ENCODE measurements at regions of chr17 and their contacts with region 1.

Region 1: GRCh38 chr17:68205251-68205807 is 42.5 kb upstream of the AMZ2 start:
- H3K4me3 Mint-ChIP-seq: peak overlapping the region; percentile 80
- H3K27ac Mint-ChIP-seq: peak overlapping the region; percentile 87
- H3K4me1 Mint-ChIP-seq: peaks cover 21% of the 10 kb centered on the region
- H3K27me3 Mint-ChIP-seq: peaks cover 46% of the 10 kb centered on the region

Region 2: DNA sequence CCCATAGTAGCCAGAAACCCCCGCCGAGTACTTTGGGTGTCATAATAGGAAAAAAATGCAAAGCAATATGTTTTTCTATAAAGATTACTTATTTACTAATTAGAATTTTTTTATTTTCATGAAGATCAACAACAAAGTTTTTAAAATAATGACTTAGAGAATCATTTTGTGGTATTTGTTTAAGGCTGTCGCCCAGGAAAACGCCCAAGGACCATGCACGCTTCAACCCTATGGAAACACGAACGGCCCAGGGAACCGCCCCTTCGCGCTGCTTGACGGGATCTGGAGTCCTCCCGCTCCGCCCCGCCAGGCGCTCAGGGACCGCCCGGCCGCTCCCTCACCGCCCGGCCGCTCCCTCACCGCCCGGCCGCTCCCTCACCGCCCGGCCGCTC is 170.2 kb before region 1 on chr17:
- intact Hi-C with region 1: no loop called
- H3K4me3 Mint-ChIP-seq: peak overlapping the region; percentile 93
- H3K27ac Mint-ChIP-seq: peak overlapping the region; percentile 87
- H3K4me1 Mint-ChIP-seq: peaks cover 16% of the 10 kb centered on the region
- H3K27me3 Mint-ChIP-seq: no peaks in the 10 kb centered on the region

Region 3: DNA sequence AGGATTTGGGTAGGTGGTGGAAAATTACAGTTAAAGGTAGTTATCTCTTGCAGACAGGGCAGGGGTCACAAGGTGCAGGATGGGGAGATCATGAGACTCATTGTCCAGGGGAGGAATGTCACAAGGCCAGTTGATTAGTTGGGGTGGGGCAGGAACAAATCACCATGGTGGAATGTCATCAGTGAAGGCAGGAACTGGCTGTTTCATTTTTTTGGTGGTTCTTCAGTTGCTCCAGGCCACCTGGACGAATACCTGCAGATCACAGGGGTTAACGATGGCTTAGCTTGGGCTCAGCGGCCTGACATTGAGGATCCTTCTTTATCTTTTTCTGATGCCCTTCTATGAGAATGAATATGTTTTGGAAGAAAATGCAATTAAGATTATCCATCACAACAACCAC is 82.7 kb before region 1 on chr17:
- intact Hi-C with region 1: no loop called
- H3K4me3 Mint-ChIP-seq: no peak overlapping the region
- H3K27ac Mint-ChIP-seq: no peak overlapping the region
- H3K4me1 Mint-ChIP-seq: peaks cover 11% of the 10 kb centered on the region
- H3K27me3 Mint-ChIP-seq: no peaks in the 10 kb centered on the region

Region 4: DNA sequence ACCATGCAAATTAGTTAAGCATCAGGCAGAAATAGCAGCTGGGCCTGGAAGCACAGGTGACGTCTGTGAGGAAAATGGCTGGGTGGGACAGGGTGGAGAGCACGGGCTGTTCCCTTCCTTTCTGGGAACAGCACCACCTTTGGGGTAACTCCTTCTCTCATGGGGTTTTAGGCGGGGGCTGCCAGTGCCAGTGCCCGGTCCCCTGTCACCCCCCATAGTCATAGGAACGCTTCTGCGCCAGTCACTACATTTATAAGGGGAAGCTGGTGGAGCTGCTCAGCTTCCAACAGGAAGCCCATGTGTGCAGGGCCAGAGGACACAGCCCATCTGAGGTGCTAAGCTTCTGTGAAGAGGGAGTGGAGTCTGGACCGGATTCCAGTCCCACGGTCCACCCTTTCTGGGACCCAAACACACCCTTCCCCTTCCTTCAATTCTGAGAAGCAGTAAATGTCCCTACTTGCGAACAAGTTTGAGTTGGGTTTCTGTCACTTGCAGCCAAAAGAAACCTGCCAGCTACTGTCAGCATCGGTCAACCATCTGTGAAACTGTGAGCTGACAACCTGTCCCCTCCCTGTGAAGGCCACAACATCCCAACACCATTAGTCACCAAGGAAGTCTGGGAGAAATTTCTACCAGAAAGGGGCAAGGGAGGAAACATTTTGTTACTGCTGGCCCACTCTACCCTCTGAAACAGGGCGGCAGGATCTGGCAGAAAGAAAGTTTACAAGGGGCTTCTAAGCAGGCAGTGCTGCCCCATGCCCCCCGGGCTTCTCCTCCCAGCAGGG is 43.5 kb before region 1 on chr17:
- intact Hi-C with region 1: no loop called
- H3K4me3 Mint-ChIP-seq: no peak overlapping the region
- H3K27ac Mint-ChIP-seq: no peak overlapping the region
- H3K4me1 Mint-ChIP-seq: no peaks in the 10 kb centered on the region
- H3K27me3 Mint-ChIP-seq: no peaks in the 10 kb centered on the region

Region 5: DNA sequence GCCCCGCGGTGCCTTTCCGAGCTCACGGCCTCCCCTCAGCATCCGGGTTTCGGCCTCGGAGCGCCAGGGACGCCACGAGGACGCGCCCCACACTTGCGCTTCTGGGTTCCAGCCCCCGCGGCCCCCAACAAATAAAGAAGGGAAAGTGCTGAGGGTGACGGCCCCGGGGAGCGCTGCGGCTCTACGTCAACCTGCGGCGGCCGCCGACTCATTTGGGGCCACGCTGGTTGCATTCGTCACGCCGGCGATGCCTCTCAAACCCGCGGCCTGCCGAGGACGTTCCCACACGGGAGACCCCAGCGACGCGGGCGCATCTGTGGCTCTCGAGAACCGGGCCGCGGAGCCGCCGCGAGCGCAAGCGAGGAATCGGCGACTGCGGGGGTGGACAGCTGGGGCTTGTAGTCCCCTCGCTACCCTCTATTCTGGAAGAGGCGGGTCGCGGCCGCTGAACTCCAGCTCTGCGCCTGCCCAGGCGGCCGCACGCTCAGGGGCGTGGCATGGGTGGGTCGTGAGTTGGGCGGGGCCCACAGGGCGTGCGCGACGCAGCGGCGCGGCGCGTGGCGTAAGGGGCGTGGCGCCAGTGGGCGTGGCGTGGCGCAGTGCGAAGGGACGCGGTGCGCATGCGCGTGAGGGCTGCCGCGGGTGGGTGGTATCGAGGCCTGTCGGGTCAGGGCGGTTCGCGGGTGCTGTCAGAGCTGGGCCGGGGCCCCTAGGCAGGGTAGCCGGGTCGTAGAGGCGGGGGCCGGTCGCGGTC is 42.3 kb after region 1 on chr17 and contains the start of gene AMZ2:
- intact Hi-C with region 1: loop called (anchors 5 kb)
- H3K4me3 Mint-ChIP-seq: peak within 1 kb of the TSS; percentile 89
- H3K27ac Mint-ChIP-seq: peak within 1 kb of the TSS; percentile 96
- H3K4me1 Mint-ChIP-seq: peaks cover 25% of the 10 kb centered on the region
- H3K27me3 Mint-ChIP-seq: no peaks in the 10 kb centered on the region

Measured in dendritic cell treated with granulocyte-macrophage colony-stimulating factor and Interleukin-4, amounts not matched to agents 40 ng/mL and 50 ng/mL, for 4 days (primary cell).